Lower lobe of right lung (tissue), 2 donors: ENCODE measurements at regions of chr2 and their contacts with region 1.

Region 1: DNA sequence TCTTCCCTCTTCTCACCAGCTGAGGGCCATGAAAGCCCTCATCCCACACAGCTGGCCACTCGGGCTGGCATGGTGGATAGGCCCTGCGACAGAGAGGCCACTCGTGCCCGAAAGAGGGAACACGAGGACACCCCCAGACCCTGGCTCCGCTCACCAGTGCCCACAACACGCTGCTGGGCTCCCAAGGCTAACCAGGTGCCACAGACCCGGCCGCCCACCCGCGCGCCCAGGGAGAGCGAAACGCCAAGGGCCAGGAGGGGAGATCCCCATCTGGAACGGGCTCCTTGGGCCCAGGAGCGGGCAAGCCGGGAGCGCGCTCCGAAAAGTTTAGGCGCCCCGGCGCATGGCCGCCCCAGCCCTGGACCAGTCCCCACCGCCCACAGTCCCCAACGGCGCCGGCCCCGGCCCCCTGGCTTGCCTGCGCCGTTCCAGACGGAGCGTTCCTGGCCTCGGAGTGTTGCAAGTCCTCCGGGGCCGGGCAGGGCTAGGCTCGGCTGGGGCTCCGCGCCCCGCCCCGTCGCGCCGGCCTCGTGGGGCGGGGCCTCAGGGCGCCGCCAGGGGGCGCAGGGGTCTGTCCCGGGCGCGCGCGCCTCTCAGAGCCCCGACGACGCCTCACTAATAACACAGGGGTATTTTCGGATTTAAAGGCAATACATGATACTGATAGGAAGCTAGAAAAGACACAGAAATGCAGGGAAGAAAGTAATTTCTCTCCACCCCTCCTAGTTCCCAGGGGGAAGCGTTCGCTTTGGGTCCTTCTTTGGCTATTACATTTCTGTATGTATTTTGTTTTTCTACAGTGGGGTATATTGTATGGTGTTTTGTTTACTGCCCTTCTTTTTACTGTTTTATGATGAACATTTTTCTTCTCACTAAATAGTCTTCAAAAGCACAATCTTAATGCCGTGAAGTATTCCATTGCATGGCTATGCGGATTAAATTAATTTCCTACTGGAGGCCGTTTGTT is at the start of gene TMBIM1:
- DNase-seq: peak; percentile 89
- ATAC-seq: peak; percentile 92 to 96
- H3K4me3 ChIP-seq: peak within 1 kb of the TSS; percentile 81
- H3K27ac ChIP-seq: peak within 1 kb of the TSS; percentile 97
- H3K4me1 ChIP-seq: peaks cover 92% of the 10 kb centered on the region
- H3K27me3 ChIP-seq: no peaks in the 10 kb centered on the region
- CTCF ChIP-seq: peak; percentile 92
- total RNA-seq, gene TMBIM1: 300 TPM

Region 2: GRCh38 chr2:218367415-218368153 is 75.3 kb after region 1 on chr2:
- intact Hi-C with region 1: loop called (anchors 10 kb)
- DNase-seq: peak; percentile 97
- ATAC-seq: peak; percentile 91 to 94
- H3K4me3 ChIP-seq: peak overlapping the region; percentile 59
- H3K27ac ChIP-seq: peak overlapping the region; percentile 95
- H3K4me1 ChIP-seq: peaks cover 55% of the 10 kb centered on the region
- H3K27me3 ChIP-seq: no peaks in the 10 kb centered on the region
- CTCF ChIP-seq: no peak